ENCODE measurements at regions of chr13 and their contacts with region 1.

Region 1: GRCh38 chr13:111076156-111077013 is 38.7 kb upstream of the ARHGEF7 start:
- DNase-seq: no peak
- ATAC-seq: no peak
- H3K4me3 ChIP-seq: no peak overlapping the region
- H3K27ac ChIP-seq: no peak overlapping the region
- H3K4me1 ChIP-seq: no peaks in the 10 kb centered on the region
- H3K27me3 ChIP-seq: no peaks in the 10 kb centered on the region
- CTCF ChIP-seq: no peak

Region 2: DNA sequence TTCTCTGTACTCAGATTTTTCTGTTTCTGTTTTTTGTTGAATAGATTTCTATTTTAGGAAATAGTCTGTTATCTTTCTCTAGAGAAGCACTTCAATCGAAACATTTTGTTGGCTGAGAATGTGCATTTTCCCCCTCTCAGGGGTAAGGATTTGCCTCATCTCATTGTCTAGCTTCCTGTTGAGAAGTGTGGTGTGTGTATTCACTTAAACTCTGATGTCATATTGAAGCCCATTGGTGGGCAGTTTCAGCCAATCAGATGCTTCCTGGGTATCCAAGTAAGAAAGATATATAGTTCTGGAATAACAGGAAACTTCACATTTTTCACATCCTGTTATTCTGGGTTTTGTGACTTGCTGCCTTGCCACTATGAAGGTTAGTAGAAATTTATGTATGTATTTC is 126.4 kb after region 1 on chr13:
- intact Hi-C with region 1: loop called in 1 of 3 experiments (anchors 10 kb)
- DNase-seq: no peak
- ATAC-seq: peak in 3 of 4 donors; percentile 42 to 54 (median 50)
- H3K4me3 ChIP-seq: no peak overlapping the region
- H3K27ac ChIP-seq: no peak overlapping the region
- H3K4me1 ChIP-seq: peaks cover 0 to 20% (median 6%) of the 10 kb centered on the region in 3 donors
- H3K27me3 ChIP-seq: no peaks in the 10 kb centered on the region
- CTCF ChIP-seq: no peak

Region 3: GRCh38 chr13:111228262-111229144 is 152.1 kb after region 1 on chr13:
- intact Hi-C with region 1: loop called in 1 of 3 experiments (anchors 10 kb)
- DNase-seq: no peak
- ATAC-seq: peak in 3 of 4 donors; percentile 39 to 66 (median 43)
- H3K4me3 ChIP-seq: no peak overlapping the region
- H3K27ac ChIP-seq: no peak overlapping the region
- H3K4me1 ChIP-seq: no peaks in the 10 kb centered on the region
- H3K27me3 ChIP-seq: no peaks in the 10 kb centered on the region
- CTCF ChIP-seq: no peak

Region 4: DNA sequence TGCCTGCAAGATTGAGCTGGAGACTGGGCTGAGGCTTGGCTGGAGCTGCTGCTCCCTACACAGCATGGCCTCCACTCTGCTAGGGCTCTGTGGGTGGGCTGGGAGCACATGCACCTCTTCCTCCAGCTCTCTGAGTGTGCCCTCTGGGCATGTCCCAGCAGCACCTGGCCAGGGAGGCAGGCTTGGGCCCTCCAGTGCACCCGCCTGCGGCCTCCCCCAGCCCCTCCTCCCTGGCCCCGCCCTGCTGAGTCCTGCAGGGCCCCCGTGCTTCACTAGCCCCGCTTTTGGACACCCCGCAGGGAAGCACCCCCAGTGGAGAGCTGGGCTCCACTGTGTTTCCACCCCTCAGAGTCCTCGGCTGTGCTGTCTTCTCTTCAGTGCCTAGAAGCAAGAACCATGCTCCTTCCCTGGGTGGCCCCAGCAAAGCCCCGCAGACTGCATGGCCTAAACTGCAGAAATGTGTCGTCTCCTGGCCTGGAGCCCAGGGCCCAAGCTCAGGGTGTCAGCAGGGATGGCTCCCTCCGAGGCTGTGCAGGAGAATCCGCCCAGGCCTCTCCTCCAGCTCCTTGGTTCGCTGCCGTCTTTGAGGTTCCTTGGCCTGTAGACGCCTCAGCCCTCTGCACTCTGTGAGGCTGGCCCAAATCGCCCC is 239.1 kb after region 1 on chr13:
- intact Hi-C with region 1: no loop called
- DNase-seq: no peak
- ATAC-seq: no peak
- H3K4me3 ChIP-seq: no peak overlapping the region
- H3K27ac ChIP-seq: no peak overlapping the region
- H3K4me1 ChIP-seq: no peaks in the 10 kb centered on the region
- H3K27me3 ChIP-seq: no peaks in the 10 kb centered on the region
- CTCF ChIP-seq: no peak